HCT116 (cell line): ENCODE measurements at regions of chr18 and their contacts with region 1.

Region 1: GRCh38 chr18:3585656-3586509 is 135.9 kb downstream of the TGIF1 start:
- DNase-seq: peak; percentile 91
- ATAC-seq: peak; percentile 96
- H3K4me3 ChIP-seq: no peak overlapping the region
- H3K27ac ChIP-seq: no peak overlapping the region
- H3K4me1 ChIP-seq: peaks cover 35 to 55% of the 10 kb centered on the region in 2 experiments
- H3K27me3 ChIP-seq: no peaks in the 10 kb centered on the region
- CTCF ChIP-seq: peak in 2 of 3 experiments; percentile 89 to 93; a peak in 4 of 6 replicates
- POLR2A ChIP-seq: no peak
- RAD21 ChIP-seq: no peak

Region 2: GRCh38 chr18:3297025-3297984 is 288.6 kb before region 1 on chr18:
- CTCF ChIA-PET with region 1: no interaction called
- POLR2A ChIA-PET with region 1: interaction called, 4 read pairs
- RAD21 ChIA-PET with region 1: no interaction called
- intact Hi-C with region 1: loop called (anchors 5 kb)
- DNase-seq: peak; percentile 94
- ATAC-seq: peak; percentile 91
- H3K4me3 ChIP-seq: peak overlapping the region; percentile 76 to 90
- H3K27ac ChIP-seq: peak overlapping the region; percentile 82
- H3K4me1 ChIP-seq: peaks cover 0 to 21% of the 10 kb centered on the region in 2 experiments; a peak in 2 of 4 replicates
- H3K27me3 ChIP-seq: no peaks in the 10 kb centered on the region
- CTCF ChIP-seq: peak; percentile 56 to 87 (median 61); a peak in 5 of 6 replicates
- POLR2A ChIP-seq: peak; percentile 95
- RAD21 ChIP-seq: no peak; the same call in 1 of the 2 replicates

Region 3: DNA sequence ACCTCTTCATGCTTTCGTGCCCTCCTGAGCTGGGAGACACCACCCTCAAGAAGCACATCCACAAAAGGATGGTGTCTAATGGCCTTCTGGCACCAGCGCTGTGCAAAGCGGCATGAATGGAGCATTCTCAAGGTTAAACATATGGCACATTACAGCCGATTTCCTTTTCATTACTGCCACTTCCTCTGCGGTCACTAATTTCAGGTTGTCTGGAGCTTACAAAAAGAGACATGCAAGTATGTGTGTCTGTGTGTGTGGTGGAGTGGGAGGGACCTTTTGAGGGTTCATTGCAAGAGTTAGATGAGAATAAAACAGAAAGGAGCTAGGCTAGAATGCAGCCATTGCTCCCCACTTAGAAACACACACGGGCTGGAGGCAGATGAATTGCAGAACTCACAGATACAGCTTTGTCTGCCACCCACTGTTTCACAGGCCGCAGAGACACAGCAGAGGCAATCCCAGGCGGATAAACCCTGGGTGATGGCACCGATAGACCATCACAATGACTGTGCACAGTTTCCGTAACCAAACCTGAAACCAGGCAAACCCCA is 59.9 kb before region 1 on chr18:
- CTCF ChIA-PET with region 1: no interaction called
- POLR2A ChIA-PET with region 1: no interaction called
- RAD21 ChIA-PET with region 1: no interaction called
- intact Hi-C with region 1: loop called (anchors 5 kb)
- DNase-seq: no peak
- ATAC-seq: no peak
- H3K4me3 ChIP-seq: no peak overlapping the region
- H3K27ac ChIP-seq: no peak overlapping the region
- H3K4me1 ChIP-seq: no peaks in the 10 kb centered on the region
- H3K27me3 ChIP-seq: no peaks in the 10 kb centered on the region
- CTCF ChIP-seq: no peak
- POLR2A ChIP-seq: no peak
- RAD21 ChIP-seq: no peak